ENCODE measurements at regions of chrX and their contacts with region 1.

Region 1: GRCh38 chrX:55160685-55161552 is 59.2 kb upstream of the PAGE5 start:
- DNase-seq: peak; percentile 90
- H3K4me3 Mint-ChIP-seq: peak overlapping the region; percentile 96
- H3K27ac Mint-ChIP-seq: peak overlapping the region; percentile 97
- H3K4me1 Mint-ChIP-seq: peaks cover 13% of the 10 kb centered on the region
- H3K27me3 Mint-ChIP-seq: peaks cover 9% of the 10 kb centered on the region
- CTCF ChIP-seq: no peak

Region 2: DNA sequence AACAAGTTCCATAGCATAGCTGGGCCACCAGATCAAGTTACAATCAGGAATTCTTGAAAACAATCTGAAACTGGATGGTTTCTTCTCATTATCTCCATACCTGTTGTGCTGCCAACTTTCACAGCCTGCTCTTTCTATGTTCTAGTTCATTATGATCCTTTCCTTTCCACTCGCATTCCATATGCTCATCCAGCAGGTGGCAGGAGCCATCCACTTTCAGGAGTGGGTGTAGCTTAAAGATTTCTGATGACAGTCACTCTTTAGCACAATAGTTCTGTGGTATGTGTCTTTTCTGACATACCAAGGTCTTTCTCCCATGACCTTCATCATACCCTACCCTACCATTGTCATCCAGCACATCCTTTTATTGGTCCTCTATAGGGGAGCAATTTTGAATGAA is 25.7 kb before region 1 on chrX:
- CTCF ChIA-PET with region 1: interaction called, 3 read pairs
- intact Hi-C with region 1: loop called (anchors 2 kb)
- DNase-seq: peak; percentile 49
- H3K4me3 Mint-ChIP-seq: no peak overlapping the region
- H3K27ac Mint-ChIP-seq: no peak overlapping the region
- H3K4me1 Mint-ChIP-seq: no peaks in the 10 kb centered on the region
- H3K27me3 Mint-ChIP-seq: peaks cover 20% of the 10 kb centered on the region
- CTCF ChIP-seq: peak; percentile 41

Region 3: GRCh38 chrX:55210931-55211681 is 50.2 kb after region 1 on chrX:
- CTCF ChIA-PET with region 1: no interaction called
- intact Hi-C with region 1: loop called (anchors 10 kb)
- DNase-seq: peak; percentile 1
- H3K4me3 Mint-ChIP-seq: peak overlapping the region; percentile 60
- H3K27ac Mint-ChIP-seq: no peak overlapping the region
- H3K4me1 Mint-ChIP-seq: no peaks in the 10 kb centered on the region
- H3K27me3 Mint-ChIP-seq: no peaks in the 10 kb centered on the region
- CTCF ChIP-seq: no peak

Measured in Calu3 (cell line).